ENCODE measurements at regions of chr20 and their contacts with region 1.

Region 1: GRCh38 chr20:9912858-9913434 is 74.1 kb upstream of the PAK5 start:
- DNase-seq: peak; percentile 54
- ATAC-seq: no peak
- H3K4me3 Mint-ChIP-seq: no peak overlapping the region
- H3K27ac Mint-ChIP-seq: no peak overlapping the region
- H3K4me1 Mint-ChIP-seq: no peaks in the 10 kb centered on the region
- H3K27me3 Mint-ChIP-seq: peaks cover 12% of the 10 kb centered on the region
- CTCF ChIP-seq: peak; percentile 74

Region 2: GRCh38 chr20:9616833-9617489 is 296.0 kb before region 1 on chr20:
- CTCF ChIA-PET with region 1: interaction called, 47 read pairs
- POLR2A ChIA-PET with region 1: no interaction called
- intact Hi-C with region 1: loop called (anchors 5 kb)
- DNase-seq: peak; percentile 69
- ATAC-seq: peak; percentile 51
- H3K4me3 Mint-ChIP-seq: no peak overlapping the region
- H3K27ac Mint-ChIP-seq: no peak overlapping the region
- H3K4me1 Mint-ChIP-seq: no peaks in the 10 kb centered on the region
- H3K27me3 Mint-ChIP-seq: no peaks in the 10 kb centered on the region
- CTCF ChIP-seq: peak; percentile 91

Region 3: GRCh38 chr20:9945408-9945807 is 32.5 kb after region 1 on chr20:
- CTCF ChIA-PET with region 1: interaction called, 18 read pairs
- POLR2A ChIA-PET with region 1: no interaction called
- intact Hi-C with region 1: no loop called
- DNase-seq: no peak
- ATAC-seq: no peak
- H3K4me3 Mint-ChIP-seq: no peak overlapping the region
- H3K27ac Mint-ChIP-seq: no peak overlapping the region
- H3K4me1 Mint-ChIP-seq: no peaks in the 10 kb centered on the region
- H3K27me3 Mint-ChIP-seq: peaks cover 4% of the 10 kb centered on the region
- CTCF ChIP-seq: no peak

Region 4: GRCh38 chr20:10263385-10264165 is 350.6 kb after region 1 on chr20:
- CTCF ChIA-PET with region 1: no interaction called
- POLR2A ChIA-PET with region 1: no interaction called
- intact Hi-C with region 1: no loop called
- DNase-seq: no peak
- ATAC-seq: no peak
- H3K4me3 Mint-ChIP-seq: no peak overlapping the region
- H3K27ac Mint-ChIP-seq: no peak overlapping the region
- H3K4me1 Mint-ChIP-seq: no peaks in the 10 kb centered on the region
- H3K27me3 Mint-ChIP-seq: no peaks in the 10 kb centered on the region
- CTCF ChIP-seq: no peak